Mammary epithelial cell (primary cell): ENCODE measurements at regions of chr7 and their contacts with region 1.

Region 1: DNA sequence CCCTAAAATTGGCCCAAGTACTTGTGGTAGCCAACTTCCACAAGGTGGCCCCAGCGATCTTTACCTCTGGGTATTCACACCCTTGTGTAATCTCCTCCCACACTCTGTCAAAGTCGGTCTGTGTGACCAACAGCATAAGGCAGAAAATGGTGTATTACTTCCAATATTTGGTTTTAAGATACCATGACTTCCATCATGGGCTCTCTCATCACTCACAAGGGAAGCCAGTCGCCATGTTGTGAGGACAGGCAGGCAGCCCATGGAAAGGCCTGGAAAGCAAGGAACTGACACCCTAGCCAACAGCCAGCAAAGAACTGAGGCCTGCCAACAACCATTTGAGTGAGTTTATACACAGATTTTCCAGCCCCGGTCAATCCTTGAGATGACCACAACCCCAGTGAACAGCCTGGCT is 91.0 kb upstream of the KMT2E start:
- DNase-seq: peak; percentile 73
- H3K4me3 ChIP-seq: no peak overlapping the region
- H3K27ac ChIP-seq: peak overlapping the region; percentile 9
- H3K4me1 ChIP-seq: no peaks in the 10 kb centered on the region
- H3K27me3 ChIP-seq: no peaks in the 10 kb centered on the region
- CTCF ChIP-seq: peak; percentile 93 to 96

Region 2: GRCh38 chr7:103573479-103574058 is 1349.4 kb before region 1 on chr7:
- CTCF ChIA-PET with region 1: no interaction called
- dilution Hi-C with region 1: no loop called
- in situ Hi-C with region 1: no loop called
- intact Hi-C with region 1: loop called (anchors 5 kb)
- DNase-seq: peak; percentile 15
- H3K4me3 ChIP-seq: no peak overlapping the region
- H3K27ac ChIP-seq: no peak overlapping the region
- H3K4me1 ChIP-seq: no peaks in the 10 kb centered on the region
- H3K27me3 ChIP-seq: no peaks in the 10 kb centered on the region
- CTCF ChIP-seq: peak; percentile 40 to 48

Region 3: DNA sequence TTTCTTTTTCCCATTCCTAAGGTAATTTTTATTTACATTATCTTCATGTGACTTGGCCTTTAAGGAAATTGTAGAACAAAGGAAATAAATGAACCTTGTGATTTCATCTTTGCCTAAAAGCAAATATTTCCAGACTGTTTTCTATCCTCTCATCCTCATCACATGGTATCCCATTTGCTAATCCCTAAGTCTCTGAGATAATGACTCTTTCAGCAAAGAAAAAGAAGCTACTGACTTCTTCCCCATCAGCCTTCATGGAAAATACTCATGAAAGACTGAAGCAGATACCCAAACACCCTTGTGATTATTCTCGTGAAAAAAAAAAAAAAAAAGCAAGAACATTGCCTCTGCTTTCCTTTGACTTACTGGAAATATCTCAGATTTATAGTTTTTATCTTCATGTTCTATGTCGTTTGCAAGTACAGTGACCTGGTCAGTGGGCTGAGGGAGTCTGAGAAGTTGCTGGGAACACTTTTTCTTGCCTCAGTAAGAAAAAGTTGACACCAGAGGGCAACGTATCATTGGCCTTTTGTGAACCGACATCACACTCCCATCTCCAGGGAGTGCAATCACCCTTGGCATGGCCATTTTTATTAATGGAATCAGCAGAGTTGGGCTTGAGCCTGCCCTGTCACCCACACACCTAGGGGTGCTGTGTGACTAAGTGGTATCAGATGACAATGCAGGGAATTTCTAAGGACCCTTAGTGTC is 155.0 kb before region 1 on chr7:
- CTCF ChIA-PET with region 1: no interaction called
- dilution Hi-C with region 1: no loop called
- in situ Hi-C with region 1: no loop called
- intact Hi-C with region 1: loop called (anchors 1 kb)
- DNase-seq: no peak
- H3K4me3 ChIP-seq: no peak overlapping the region
- H3K27ac ChIP-seq: no peak overlapping the region
- H3K4me1 ChIP-seq: no peaks in the 10 kb centered on the region
- H3K27me3 ChIP-seq: no peaks in the 10 kb centered on the region
- CTCF ChIP-seq: no peak

Region 4: GRCh38 chr7:104933521-104933988 is 10.5 kb after region 1 on chr7:
- CTCF ChIA-PET with region 1: no interaction called
- dilution Hi-C with region 1: no loop called
- in situ Hi-C with region 1: no loop called
- intact Hi-C with region 1: no loop called
- DNase-seq: no peak
- H3K4me3 ChIP-seq: no peak overlapping the region
- H3K27ac ChIP-seq: no peak overlapping the region
- H3K4me1 ChIP-seq: peaks cover 6% of the 10 kb centered on the region
- H3K27me3 ChIP-seq: no peaks in the 10 kb centered on the region
- CTCF ChIP-seq: no peak

Region 5: DNA sequence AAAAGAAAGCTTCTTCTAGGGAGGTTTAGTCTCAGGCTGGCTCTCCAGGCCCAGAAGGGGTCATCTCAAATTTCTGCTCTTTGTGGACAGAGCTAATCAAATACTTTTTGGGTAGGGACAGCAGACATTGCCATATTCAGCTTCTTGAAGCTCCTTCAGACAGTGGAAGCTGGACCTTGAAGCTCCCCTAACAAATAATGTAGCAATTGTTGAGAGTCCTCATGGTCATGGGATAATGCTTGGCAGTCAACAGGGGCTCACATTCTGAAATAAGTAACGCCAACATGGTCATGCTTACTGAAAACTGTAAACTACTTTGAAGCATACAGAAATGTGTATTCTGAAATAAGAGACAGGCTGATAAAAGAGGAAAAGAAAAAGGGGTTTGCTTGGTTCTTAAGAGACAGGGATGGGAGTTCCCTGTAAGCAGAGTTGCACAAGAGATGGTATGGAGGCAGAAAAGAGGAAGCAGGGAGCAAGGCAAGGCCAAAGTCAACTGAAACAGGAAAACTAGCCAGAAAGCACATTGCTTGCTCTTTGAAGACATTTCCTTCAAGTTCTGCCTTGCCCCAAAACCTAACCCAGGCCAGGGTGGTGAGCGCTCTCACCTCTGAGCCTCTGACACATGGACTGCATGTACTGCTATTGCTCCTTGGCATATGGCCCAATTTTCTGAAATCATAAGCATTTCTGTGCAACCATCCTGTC is 37.9 kb after region 1 on chr7:
- CTCF ChIA-PET with region 1: interaction called, 3 read pairs
- dilution Hi-C with region 1: loop called (anchors 5 kb)
- in situ Hi-C with region 1: no loop called
- intact Hi-C with region 1: no loop called
- DNase-seq: peak; percentile 83
- H3K4me3 ChIP-seq: no peak overlapping the region
- H3K27ac ChIP-seq: peak overlapping the region; percentile 16
- H3K4me1 ChIP-seq: peaks cover 53% of the 10 kb centered on the region
- H3K27me3 ChIP-seq: no peaks in the 10 kb centered on the region
- CTCF ChIP-seq: no peak

Region 6: GRCh38 chr7:105046414-105046813 is 123.4 kb after region 1 on chr7:
- CTCF ChIA-PET with region 1: no interaction called
- dilution Hi-C with region 1: no loop called
- in situ Hi-C with region 1: loop called in 1 of 2 experiments (anchors 10 kb)
- intact Hi-C with region 1: loop called (anchors 1 kb)
- DNase-seq: peak; percentile 27
- H3K4me3 ChIP-seq: no peak overlapping the region
- H3K27ac ChIP-seq: no peak overlapping the region
- H3K4me1 ChIP-seq: peaks cover 8% of the 10 kb centered on the region
- H3K27me3 ChIP-seq: no peaks in the 10 kb centered on the region
- CTCF ChIP-seq: no peak

Region 7: DNA sequence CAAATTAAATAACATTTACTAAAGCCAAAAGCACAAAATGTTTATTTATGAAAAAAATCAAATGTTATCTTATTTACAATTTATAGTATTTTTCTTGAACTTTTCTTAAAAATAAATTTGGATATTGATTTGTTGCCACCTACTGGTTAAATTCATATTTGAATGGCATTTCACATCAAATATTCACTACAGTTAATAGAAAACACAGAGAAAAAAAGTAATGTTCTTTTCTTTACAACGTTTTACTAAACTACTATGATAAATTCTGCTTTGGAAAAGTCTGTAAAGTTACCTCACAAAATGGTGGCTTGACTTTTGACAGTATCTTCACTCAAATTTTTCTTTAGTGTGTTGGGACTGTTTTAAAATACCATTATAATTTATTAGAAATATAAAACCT is 413.0 kb after region 1 on chr7:
- CTCF ChIA-PET with region 1: no interaction called
- dilution Hi-C with region 1: no loop called
- in situ Hi-C with region 1: no loop called
- intact Hi-C with region 1: loop called (anchors 2 kb)
- DNase-seq: no peak
- H3K4me3 ChIP-seq: no peak overlapping the region
- H3K27ac ChIP-seq: no peak overlapping the region
- H3K4me1 ChIP-seq: peaks cover 4% of the 10 kb centered on the region
- H3K27me3 ChIP-seq: no peaks in the 10 kb centered on the region
- CTCF ChIP-seq: peak; percentile 28 to 34

Region 8: GRCh38 chr7:105589356-105590077 is 666.5 kb after region 1 on chr7:
- CTCF ChIA-PET with region 1: interaction called, 3 read pairs
- dilution Hi-C with region 1: no loop called
- in situ Hi-C with region 1: no loop called
- intact Hi-C with region 1: loop called (anchors 1 kb)
- DNase-seq: peak; percentile 76
- H3K4me3 ChIP-seq: no peak overlapping the region
- H3K27ac ChIP-seq: no peak overlapping the region
- H3K4me1 ChIP-seq: no peaks in the 10 kb centered on the region
- H3K27me3 ChIP-seq: no peaks in the 10 kb centered on the region
- CTCF ChIP-seq: peak; percentile 74 to 83

Region 9: GRCh38 chr7:105849122-105849855 is 926.3 kb after region 1 on chr7:
- CTCF ChIA-PET with region 1: no interaction called
- dilution Hi-C with region 1: no loop called
- in situ Hi-C with region 1: no loop called
- intact Hi-C with region 1: no loop called
- DNase-seq: peak; percentile 72
- H3K4me3 ChIP-seq: no peak overlapping the region
- H3K27ac ChIP-seq: peak overlapping the region; percentile 26
- H3K4me1 ChIP-seq: peaks cover 17% of the 10 kb centered on the region
- H3K27me3 ChIP-seq: no peaks in the 10 kb centered on the region
- CTCF ChIP-seq: no peak